Heart left ventricle (tissue), 16 donors: ENCODE measurements at regions of chr6 and their contacts with region 1.

Region 1: GRCh38 chr6:131063028-131063763 is at the start of gene EPB41L2:
- DNase-seq: peak; percentile 89 to 93 (median 89)
- ATAC-seq: peak; percentile 71 to 98 (median 94)
- H3K4me3 ChIP-seq: peak within 1 kb of the TSS; percentile 57 to 99 (median 90)
- H3K27ac ChIP-seq: peak within 1 kb of the TSS; percentile 37 to 94 (median 86)
- H3K4me1 ChIP-seq: peaks cover 0 to 31% (median 11%) of the 10 kb centered on the region in 12 donors
- H3K27me3 ChIP-seq: no peaks in the 10 kb centered on the region
- CTCF ChIP-seq: peak in 9 of 12 donors; percentile 13 to 50 (median 33)
- POLR2A ChIP-seq: peak; percentile 14 to 94
- total RNA-seq, gene EPB41L2: 41.0 to 115 (median 53.7) TPM

Region 2: GRCh38 chr6:130900913-130901312 is 162.3 kb before region 1 on chr6:
- intact Hi-C with region 1: loop called in 2 of 10 experiments (anchors 5 kb)
- DNase-seq: peak in 4 of 5 donors; percentile 20 to 60 (median 46)
- ATAC-seq: peak in 3 of 4 donors; percentile 62 to 72 (median 65)
- H3K4me3 ChIP-seq: no peak overlapping the region
- H3K27ac ChIP-seq: no peak overlapping the region
- H3K4me1 ChIP-seq: peaks cover 0 to 7% (median 0%) of the 10 kb centered on the region in 12 donors
- H3K27me3 ChIP-seq: no peaks in the 10 kb centered on the region
- CTCF ChIP-seq: no peak
- POLR2A ChIP-seq: no peak

Region 3: GRCh38 chr6:130969791-130970491 is 93.3 kb before region 1 on chr6:
- intact Hi-C with region 1: loop called in 6 of 10 experiments (anchors 2 to 10 kb)
- DNase-seq: peak in 4 of 5 donors; percentile 53 to 73 (median 64)
- ATAC-seq: peak; percentile 70 to 88 (median 81)
- H3K4me3 ChIP-seq: peak overlapping the region; percentile 14 to 69 (median 52)
- H3K27ac ChIP-seq: peak overlapping the region; percentile 33 to 85 (median 76)
- H3K4me1 ChIP-seq: peaks cover 0 to 49% (median 30%) of the 10 kb centered on the region in 12 donors
- H3K27me3 ChIP-seq: no peaks in the 10 kb centered on the region
- CTCF ChIP-seq: no peak
- POLR2A ChIP-seq: no peak

Region 4: DNA sequence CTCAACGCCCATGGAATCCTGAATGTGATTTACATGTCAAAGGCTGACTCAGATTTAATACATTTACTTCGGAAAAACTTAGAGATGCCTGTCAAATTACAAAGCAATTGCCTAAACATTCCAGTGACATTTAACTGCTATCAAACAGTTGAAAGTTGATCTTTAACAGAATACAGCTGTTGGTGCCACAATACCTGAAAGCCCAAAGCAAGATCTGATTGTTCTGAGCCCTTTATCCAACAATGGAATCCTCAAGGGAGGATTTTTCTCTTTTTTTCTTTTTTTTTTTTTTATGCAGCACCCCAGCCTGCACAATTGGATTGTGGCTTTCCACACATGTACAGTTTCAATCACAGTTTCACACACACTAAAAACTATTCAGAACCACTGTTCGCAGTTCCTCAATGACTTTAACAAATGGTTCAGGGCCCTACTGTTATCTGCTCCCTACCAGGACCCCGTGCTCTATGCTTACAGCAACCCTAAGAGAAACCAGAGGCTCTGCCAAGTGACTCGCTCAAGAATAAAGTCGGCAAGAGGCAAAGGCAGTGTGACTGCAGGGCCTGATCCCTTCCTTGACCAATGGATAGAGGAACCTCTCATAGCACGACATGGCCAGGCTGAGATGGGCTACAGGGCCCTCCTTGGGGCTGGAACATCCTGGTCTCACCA is 33.4 kb before region 1 on chr6:
- intact Hi-C with region 1: loop called in 1 of 10 experiments (anchors 5 kb)
- DNase-seq: peak in 2 of 5 donors; percentile 38 to 52
- ATAC-seq: peak; percentile 65 to 81 (median 73)
- H3K4me3 ChIP-seq: no peak overlapping the region
- H3K27ac ChIP-seq: peak overlapping the region in 7 of 12 donors; percentile 1 to 49 (median 41)
- H3K4me1 ChIP-seq: peaks cover 0 to 27% (median 13%) of the 10 kb centered on the region in 12 donors
- H3K27me3 ChIP-seq: no peaks in the 10 kb centered on the region
- CTCF ChIP-seq: no peak
- POLR2A ChIP-seq: no peak

Region 5: DNA sequence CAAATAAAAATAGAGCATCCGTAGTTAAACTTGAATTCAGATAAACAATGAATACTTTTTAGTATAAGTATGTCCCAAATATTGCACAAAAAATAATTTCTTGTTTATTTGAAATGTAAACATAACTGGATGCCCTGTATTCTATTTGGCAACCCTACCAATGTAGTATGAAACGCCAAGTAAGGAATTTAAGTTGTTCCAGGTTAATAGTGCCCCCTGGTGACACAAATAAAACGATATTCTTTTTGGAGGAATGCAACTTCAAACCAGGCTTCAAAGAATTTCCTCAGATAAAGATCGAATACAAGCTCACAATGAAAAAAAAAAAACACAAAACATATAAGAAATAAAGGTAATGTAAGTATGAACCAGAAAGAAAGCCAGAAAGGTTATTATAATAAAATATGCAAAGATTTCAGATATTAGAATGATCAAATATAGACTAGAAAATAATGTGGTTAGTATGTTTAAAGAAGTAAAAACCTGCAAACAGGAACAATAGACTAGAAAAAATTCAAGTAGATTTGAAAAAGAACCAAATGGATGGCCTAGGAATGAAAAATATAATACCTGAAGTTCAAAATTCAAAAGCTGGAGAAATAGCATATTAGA is 53.7 kb after region 1 on chr6:
- intact Hi-C with region 1: loop called in 3 of 10 experiments (anchors 5 to 10 kb)
- DNase-seq: no peak
- ATAC-seq: peak in 2 of 4 donors; percentile 39 to 42
- H3K4me3 ChIP-seq: no peak overlapping the region
- H3K27ac ChIP-seq: no peak overlapping the region
- H3K4me1 ChIP-seq: peaks cover 0 to 10% (median 0%) of the 10 kb centered on the region in 12 donors
- H3K27me3 ChIP-seq: no peaks in the 10 kb centered on the region
- CTCF ChIP-seq: peak; percentile 37 to 71 (median 49)
- POLR2A ChIP-seq: no peak